ENCODE measurements at regions of chr17 and their contacts with region 1.

Region 1: GRCh38 chr17:8894673-8895578 is 27.5 kb upstream of the PIK3R6 start:
- DNase-seq: peak; percentile 78 to 93
- ATAC-seq: peak; percentile 84 to 93
- H3K4me3 ChIP-seq: no peak overlapping the region
- H3K27ac ChIP-seq: no peak overlapping the region
- H3K4me1 ChIP-seq: no peaks in the 10 kb centered on the region
- CTCF ChIP-seq: peak; percentile 73
- EP300 ChIP-seq: no peak
- POLR2A ChIP-seq: no peak
- RAD21 ChIP-seq: peak; percentile 73 to 84

Region 2: DNA sequence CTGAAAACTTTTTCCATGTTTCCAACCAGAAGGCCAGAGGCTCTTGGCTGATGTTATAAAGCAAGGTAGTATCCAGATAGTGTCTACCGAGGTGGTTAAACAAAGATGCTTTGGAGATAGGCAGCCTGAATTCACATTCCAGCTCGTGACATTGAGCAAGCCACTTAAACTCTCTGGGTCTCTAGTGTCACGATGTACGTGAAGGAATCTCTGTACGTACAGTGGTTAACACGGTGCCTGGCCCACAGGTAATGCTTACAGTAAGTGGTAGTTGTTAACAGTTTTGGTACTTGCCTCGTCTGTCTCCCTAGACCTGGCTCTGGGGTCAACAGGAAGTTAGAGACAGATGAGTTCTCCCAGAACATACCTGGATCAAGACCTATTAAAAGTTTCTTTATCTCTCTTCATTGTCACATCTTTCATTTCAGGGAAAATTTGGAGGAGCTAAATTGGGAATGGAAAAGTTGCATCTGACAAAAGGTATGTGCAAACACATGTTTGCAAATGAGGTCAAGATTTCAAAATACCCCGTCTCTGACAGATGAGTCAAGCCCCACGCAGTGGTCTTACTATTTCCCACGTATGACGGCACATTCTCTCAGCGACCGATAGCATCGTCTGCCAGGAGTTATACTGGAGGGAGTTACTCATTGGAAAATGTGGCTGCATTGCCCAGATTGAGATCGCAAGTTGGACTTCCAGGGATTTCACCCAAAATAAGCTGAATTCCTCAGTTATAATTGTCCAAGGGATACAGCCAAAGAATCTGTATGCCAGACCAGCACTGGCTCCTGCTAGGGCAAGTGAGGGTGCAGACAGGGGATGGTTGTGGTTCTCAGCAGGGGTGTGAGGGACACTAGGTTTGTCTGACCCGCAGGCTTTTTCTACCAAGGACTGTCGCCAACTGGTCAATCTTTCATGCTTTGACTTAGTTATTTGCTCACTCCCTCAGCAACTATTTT is 245.5 kb before region 1 on chr17:
- CTCF ChIA-PET with region 1: no interaction called
- POLR2A ChIA-PET with region 1: no interaction called
- DNase-seq: no peak
- ATAC-seq: no peak
- H3K4me3 ChIP-seq: no peak overlapping the region
- H3K27ac ChIP-seq: no peak overlapping the region
- H3K4me1 ChIP-seq: peaks cover 6% of the 10 kb centered on the region; the same call in 1 of the 3 replicates
- CTCF ChIP-seq: no peak
- EP300 ChIP-seq: no peak
- POLR2A ChIP-seq: no peak
- RAD21 ChIP-seq: no peak

Region 3: GRCh38 chr17:8849311-8850041 is 45.5 kb before region 1 on chr17:
- CTCF ChIA-PET with region 1: interaction called, 13 read pairs
- POLR2A ChIA-PET with region 1: no interaction called
- DNase-seq: no peak
- ATAC-seq: no peak
- H3K4me3 ChIP-seq: no peak overlapping the region
- H3K27ac ChIP-seq: no peak overlapping the region
- H3K4me1 ChIP-seq: no peaks in the 10 kb centered on the region
- CTCF ChIP-seq: no peak
- EP300 ChIP-seq: no peak
- POLR2A ChIP-seq: no peak
- RAD21 ChIP-seq: no peak

Region 4: DNA sequence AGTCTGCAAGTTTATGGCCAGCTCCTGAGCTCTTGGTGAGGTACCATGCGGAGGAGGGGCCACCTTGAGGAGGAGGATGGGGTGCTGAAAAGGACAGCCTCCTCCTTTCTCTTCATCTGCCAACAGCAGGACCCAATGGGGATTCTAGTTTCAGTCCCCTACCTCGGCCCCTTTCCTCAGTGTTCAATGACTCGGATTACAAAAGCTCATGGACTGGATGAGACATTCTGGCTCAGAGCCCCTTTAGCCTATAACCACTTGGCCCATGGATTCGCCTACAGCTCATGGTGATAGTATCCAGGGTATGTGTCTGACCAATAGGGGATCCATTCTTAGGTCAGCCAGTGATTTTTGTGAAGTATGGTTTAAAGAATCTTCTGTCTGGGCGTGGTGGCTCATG is 19.0 kb before region 1 on chr17:
- CTCF ChIA-PET with region 1: interaction called, 40 read pairs
- POLR2A ChIA-PET with region 1: no interaction called
- DNase-seq: no peak
- ATAC-seq: no peak
- H3K4me3 ChIP-seq: no peak overlapping the region
- H3K27ac ChIP-seq: no peak overlapping the region
- H3K4me1 ChIP-seq: peaks cover 7% of the 10 kb centered on the region
- CTCF ChIP-seq: no peak
- EP300 ChIP-seq: no peak
- POLR2A ChIP-seq: no peak
- RAD21 ChIP-seq: no peak

Region 5: GRCh38 chr17:8909586-8910270 is 14.8 kb after region 1 on chr17:
- CTCF ChIA-PET with region 1: interaction called, 58 read pairs
- POLR2A ChIA-PET with region 1: no interaction called
- DNase-seq: no peak
- ATAC-seq: no peak
- H3K4me3 ChIP-seq: no peak overlapping the region
- H3K27ac ChIP-seq: no peak overlapping the region
- H3K4me1 ChIP-seq: no peaks in the 10 kb centered on the region
- CTCF ChIP-seq: no peak
- EP300 ChIP-seq: no peak
- POLR2A ChIP-seq: no peak
- RAD21 ChIP-seq: no peak